ENCODE measurements at regions of chr7 and their contacts with region 1.

Region 1: GRCh38 chr7:140049339-140050024 is 13.3 kb downstream of the PARP12 start:
- DNase-seq: peak; percentile 98
- ATAC-seq: peak; percentile 96
- H3K4me3 ChIP-seq: peak overlapping the region in 1 of 3 experiments; percentile 41; a peak in 2 of 6 replicates
- H3K27ac ChIP-seq: peak overlapping the region; percentile 76
- H3K4me1 ChIP-seq: peaks cover 63% of the 10 kb centered on the region
- H3K27me3 ChIP-seq: no peaks in the 10 kb centered on the region
- CTCF ChIP-seq: 0 out of 2 replicates have a peak, but pooled peaks have one; percentile 13
- EP300 ChIP-seq: peak; percentile 74 to 99; a peak in 3 of 4 replicates
- POLR2A ChIP-seq: 0 out of 4 replicates have a peak, but pooled peaks of 1 of the 2 experiments have one; percentile 41
- RAD21 ChIP-seq: no peak

Region 2: GRCh38 chr7:140062118-140062527 is 12.6 kb after region 1 on chr7:
- CTCF ChIA-PET with region 1: no interaction called
- POLR2A ChIA-PET with region 1: interaction called, 14 read pairs
- in situ Hi-C with region 1: no loop called
- intact Hi-C with region 1: no loop called
- DNase-seq: no peak
- ATAC-seq: no peak
- H3K4me3 ChIP-seq: peak overlapping the region; percentile 51 to 73 (median 58); a peak in 5 of 6 replicates
- H3K27ac ChIP-seq: peak overlapping the region; percentile 69
- H3K4me1 ChIP-seq: peaks cover 67% of the 10 kb centered on the region
- H3K27me3 ChIP-seq: no peaks in the 10 kb centered on the region
- CTCF ChIP-seq: no peak
- EP300 ChIP-seq: no peak
- POLR2A ChIP-seq: no peak
- RAD21 ChIP-seq: no peak

Region 3: DNA sequence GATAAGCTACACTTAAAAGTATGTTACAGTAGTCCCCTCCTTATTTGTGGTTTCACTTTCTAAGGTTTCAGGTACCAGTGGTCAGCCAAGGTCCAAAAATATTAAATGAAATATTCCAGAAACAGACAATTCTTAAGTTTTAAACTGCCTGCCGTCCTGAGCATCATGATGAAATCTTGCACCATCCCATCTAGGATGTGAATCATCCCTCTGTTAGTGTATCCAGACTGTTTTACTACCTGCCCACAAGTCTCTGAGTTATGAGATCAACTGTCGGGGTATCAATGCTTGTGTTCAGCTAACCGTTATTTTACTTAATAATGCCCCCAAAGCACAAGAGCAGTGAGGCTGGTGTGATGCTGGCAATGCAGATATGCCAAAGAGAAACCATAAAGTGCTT is 115.9 kb after region 1 on chr7:
- CTCF ChIA-PET with region 1: no interaction called
- POLR2A ChIA-PET with region 1: no interaction called
- in situ Hi-C with region 1: no loop called
- intact Hi-C with region 1: no loop called
- DNase-seq: no peak
- ATAC-seq: peak; percentile 36; the same call in 1 of the 3 replicates
- H3K4me3 ChIP-seq: no peak overlapping the region
- H3K27ac ChIP-seq: no peak overlapping the region
- H3K4me1 ChIP-seq: peaks cover 73% of the 10 kb centered on the region
- H3K27me3 ChIP-seq: no peaks in the 10 kb centered on the region
- CTCF ChIP-seq: no peak
- EP300 ChIP-seq: no peak
- POLR2A ChIP-seq: no peak
- RAD21 ChIP-seq: no peak